ENCODE measurements at regions of chr15 and their contacts with region 1.

Region 1: GRCh38 chr15:43791993-43792760 is at the start of gene SERF2:
- DNase-seq: peak; percentile 99
- ATAC-seq: peak; percentile 91 to 98 (median 92)
- H3K4me3 ChIP-seq: peak within 1 kb of the TSS; percentile 99
- H3K4me3 Mint-ChIP-seq: peak within 1 kb of the TSS; percentile 97
- H3K27ac ChIP-seq: peak within 1 kb of the TSS; percentile 98
- H3K27ac Mint-ChIP-seq: peak within 1 kb of the TSS; percentile 98 to 99
- H3K4me1 ChIP-seq: peaks cover 35% of the 10 kb centered on the region
- H3K4me1 Mint-ChIP-seq: peaks cover 46 to 57% of the 10 kb centered on the region in 2 donors
- H3K27me3 ChIP-seq: no peaks in the 10 kb centered on the region
- H3K27me3 Mint-ChIP-seq: no peaks in the 10 kb centered on the region
- CTCF ChIP-seq: no peak
- total RNA-seq, gene SERF2: 476 to 551 (median 526) TPM

Region 2: GRCh38 chr15:43749690-43750345 is 42.4 kb before region 1 on chr15:
- intact Hi-C with region 1: loop called (anchors 1 kb)
- DNase-seq: peak; percentile 35 to 85
- ATAC-seq: peak; percentile 53 to 70 (median 56)
- H3K4me3 ChIP-seq: peak overlapping the region; percentile 37
- H3K4me3 Mint-ChIP-seq: peak overlapping the region; percentile 73
- H3K27ac ChIP-seq: peak overlapping the region; percentile 65
- H3K27ac Mint-ChIP-seq: peak overlapping the region; percentile 96 to 99
- H3K4me1 ChIP-seq: peaks cover 49% of the 10 kb centered on the region
- H3K4me1 Mint-ChIP-seq: peaks cover 46 to 60% of the 10 kb centered on the region in 2 donors
- H3K27me3 ChIP-seq: no peaks in the 10 kb centered on the region
- H3K27me3 Mint-ChIP-seq: no peaks in the 10 kb centered on the region
- CTCF ChIP-seq: no peak

Region 3: DNA sequence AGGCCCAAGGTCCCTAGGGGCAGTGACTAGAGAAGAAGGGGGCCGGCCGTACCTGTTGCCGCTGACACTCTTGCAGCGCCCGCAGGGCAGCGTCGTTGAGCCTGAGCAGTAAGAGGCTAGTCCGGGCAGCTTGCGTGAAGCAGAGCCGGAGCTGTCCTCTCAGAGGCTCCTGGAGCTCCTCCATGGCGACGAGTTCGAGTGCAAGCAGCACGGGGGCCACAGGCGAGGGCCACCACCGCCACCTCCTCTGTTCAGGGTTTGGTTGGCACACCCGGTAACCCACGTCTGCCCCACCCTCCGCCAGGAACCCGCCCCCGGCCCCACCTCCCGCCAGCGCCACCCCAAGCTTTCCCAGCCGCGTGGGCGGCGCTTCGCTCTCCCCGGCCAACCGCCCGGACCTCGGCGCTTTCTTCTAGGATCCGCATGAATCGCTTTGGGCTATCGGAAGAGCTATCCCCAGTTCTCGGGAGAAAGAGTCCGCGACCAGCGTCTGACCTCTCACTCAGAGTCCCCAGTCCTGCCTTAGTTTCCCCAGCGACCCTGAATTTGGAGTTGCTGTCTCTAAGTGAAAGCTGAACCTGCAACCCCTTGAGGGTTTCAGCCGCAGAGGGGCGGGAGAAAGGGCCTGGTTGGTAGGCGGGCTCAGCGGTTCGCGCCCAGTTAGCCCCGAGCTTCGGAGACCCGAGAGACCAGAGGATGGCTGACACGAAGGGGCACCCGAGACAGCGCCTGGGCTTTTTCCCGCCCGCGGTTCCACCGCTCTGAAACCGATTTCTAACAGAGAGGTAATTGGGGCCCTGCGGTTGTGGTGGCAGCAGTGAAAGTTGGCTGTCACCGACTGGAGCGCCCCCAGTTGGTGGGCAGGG is 15.2 kb before region 1 on chr15 and contains the start of gene ELL3:
- intact Hi-C with region 1: loop called (anchors 1 kb)
- DNase-seq: peak; percentile 83 to 93
- ATAC-seq: peak; percentile 77 to 85 (median 82)
- H3K4me3 ChIP-seq: peak within 1 kb of the TSS; percentile 48
- H3K4me3 Mint-ChIP-seq: peak within 1 kb of the TSS; percentile 94
- H3K27ac ChIP-seq: peak within 1 kb of the TSS; percentile 28
- H3K27ac Mint-ChIP-seq: peak within 1 kb of the TSS; percentile 85 to 92
- H3K4me1 ChIP-seq: peaks cover 22% of the 10 kb centered on the region
- H3K4me1 Mint-ChIP-seq: peaks cover 12 to 22% of the 10 kb centered on the region in 2 donors
- H3K27me3 ChIP-seq: no peaks in the 10 kb centered on the region
- H3K27me3 Mint-ChIP-seq: no peaks in the 10 kb centered on the region
- CTCF ChIP-seq: no peak
- total RNA-seq, gene ELL3: 0.82 to 0.88 TPM in 2 of 3 donors, not detected in the other

Region 4: DNA sequence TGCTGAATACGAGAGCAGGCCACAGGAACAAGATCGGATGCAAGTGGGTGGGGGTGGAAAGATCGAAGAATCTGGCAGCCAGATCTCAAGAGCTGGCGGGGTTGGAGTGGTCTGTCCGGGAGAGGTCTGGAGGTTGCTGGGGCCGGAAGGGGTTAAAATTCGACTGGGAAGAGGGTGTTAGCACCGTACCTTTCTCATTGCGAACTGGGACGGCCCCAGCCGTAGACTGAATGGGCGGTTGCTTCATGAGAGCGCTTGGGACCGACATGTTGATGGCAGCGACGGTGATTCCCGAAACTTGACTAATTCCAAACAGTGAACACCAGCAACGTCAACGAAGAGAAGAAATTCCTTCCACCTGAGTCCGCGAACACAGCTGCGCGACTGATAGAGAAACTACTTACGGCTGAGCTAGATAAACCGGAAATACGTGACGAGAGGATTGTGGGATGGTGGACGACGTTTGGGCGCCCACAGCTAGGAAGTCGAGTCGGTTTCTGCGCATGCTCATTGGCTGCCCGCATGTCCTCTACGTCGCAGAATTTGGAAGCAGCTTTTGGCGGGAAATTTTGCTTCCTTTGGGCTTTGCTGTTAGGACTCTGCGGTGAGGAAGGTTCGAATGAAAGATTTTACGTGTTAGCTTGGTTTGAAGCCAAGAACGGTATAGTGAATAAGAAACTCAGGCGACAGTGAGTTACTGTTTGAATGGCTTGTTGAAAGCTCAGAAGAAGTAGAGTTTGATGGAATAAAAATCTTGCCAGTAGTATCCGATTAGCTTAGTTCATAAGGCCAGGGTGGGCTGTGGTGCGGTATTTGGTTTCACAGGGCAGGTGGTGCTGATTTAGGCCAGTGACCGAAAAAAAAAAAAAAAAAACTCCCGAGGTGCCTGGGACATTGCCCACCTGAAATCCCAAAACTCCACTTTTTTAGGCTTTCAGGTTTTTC is 32.4 kb after region 1 on chr15 and contains the start of gene MFAP1:
- intact Hi-C with region 1: loop called (anchors 1 kb)
- DNase-seq: peak; percentile 80 to 99
- ATAC-seq: peak; percentile 87 to 92 (median 90)
- H3K4me3 ChIP-seq: peak within 1 kb of the TSS; percentile 99
- H3K4me3 Mint-ChIP-seq: peak within 1 kb of the TSS; percentile 99
- H3K27ac ChIP-seq: peak within 1 kb of the TSS; percentile 97
- H3K27ac Mint-ChIP-seq: peak within 1 kb of the TSS; percentile 99
- H3K4me1 ChIP-seq: peaks cover 34% of the 10 kb centered on the region
- H3K4me1 Mint-ChIP-seq: peaks cover 44 to 50% of the 10 kb centered on the region in 2 donors
- H3K27me3 ChIP-seq: no peaks in the 10 kb centered on the region
- H3K27me3 Mint-ChIP-seq: no peaks in the 10 kb centered on the region
- CTCF ChIP-seq: no peak
- total RNA-seq, gene MFAP1: 10.2 to 13.3 (median 12.3) TPM

Region 5: DNA sequence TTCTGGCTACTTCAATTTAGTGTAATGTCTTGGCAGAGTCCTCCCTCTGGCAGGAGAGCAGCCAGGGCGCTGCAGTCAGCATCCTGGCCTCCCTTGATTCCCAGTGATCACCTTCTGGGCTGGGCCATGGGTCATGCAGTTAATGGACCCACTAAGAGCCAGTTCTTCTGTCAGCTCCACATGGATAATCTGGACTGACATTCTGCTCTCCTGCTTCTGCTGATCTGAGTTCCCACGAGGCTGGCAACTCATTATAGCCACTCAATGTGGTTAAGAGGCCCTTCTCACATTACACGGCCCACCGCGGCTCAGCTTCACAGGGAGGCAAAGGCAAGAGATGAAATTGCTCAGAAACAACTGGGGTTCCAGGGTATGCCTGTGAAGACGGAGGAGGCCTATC is 128.6 kb after region 1 on chr15:
- intact Hi-C with region 1: no loop called
- DNase-seq: no peak
- ATAC-seq: no peak
- H3K4me3 ChIP-seq: no peak overlapping the region
- H3K4me3 Mint-ChIP-seq: no peak overlapping the region
- H3K27ac ChIP-seq: no peak overlapping the region
- H3K27ac Mint-ChIP-seq: no peak overlapping the region
- H3K4me1 ChIP-seq: no peaks in the 10 kb centered on the region
- H3K4me1 Mint-ChIP-seq: no peaks in the 10 kb centered on the region
- H3K27me3 ChIP-seq: no peaks in the 10 kb centered on the region
- H3K27me3 Mint-ChIP-seq: peaks cover 0 to 3% of the 10 kb centered on the region in 2 donors
- CTCF ChIP-seq: no peak

Region 6: GRCh38 chr15:44102675-44103254 is 310.6 kb after region 1 on chr15:
- intact Hi-C with region 1: no loop called
- DNase-seq: no peak
- ATAC-seq: no peak
- H3K4me3 ChIP-seq: no peak overlapping the region
- H3K4me3 Mint-ChIP-seq: no peak overlapping the region
- H3K27ac ChIP-seq: no peak overlapping the region
- H3K27ac Mint-ChIP-seq: no peak overlapping the region
- H3K4me1 ChIP-seq: no peaks in the 10 kb centered on the region
- H3K4me1 Mint-ChIP-seq: no peaks in the 10 kb centered on the region
- H3K27me3 ChIP-seq: peaks cover 4% of the 10 kb centered on the region
- H3K27me3 Mint-ChIP-seq: peaks cover 6 to 29% of the 10 kb centered on the region in 2 donors
- CTCF ChIP-seq: no peak